Panc1 (cell line): ENCODE measurements at regions of chr5 and their contacts with region 1.

Region 1: DNA sequence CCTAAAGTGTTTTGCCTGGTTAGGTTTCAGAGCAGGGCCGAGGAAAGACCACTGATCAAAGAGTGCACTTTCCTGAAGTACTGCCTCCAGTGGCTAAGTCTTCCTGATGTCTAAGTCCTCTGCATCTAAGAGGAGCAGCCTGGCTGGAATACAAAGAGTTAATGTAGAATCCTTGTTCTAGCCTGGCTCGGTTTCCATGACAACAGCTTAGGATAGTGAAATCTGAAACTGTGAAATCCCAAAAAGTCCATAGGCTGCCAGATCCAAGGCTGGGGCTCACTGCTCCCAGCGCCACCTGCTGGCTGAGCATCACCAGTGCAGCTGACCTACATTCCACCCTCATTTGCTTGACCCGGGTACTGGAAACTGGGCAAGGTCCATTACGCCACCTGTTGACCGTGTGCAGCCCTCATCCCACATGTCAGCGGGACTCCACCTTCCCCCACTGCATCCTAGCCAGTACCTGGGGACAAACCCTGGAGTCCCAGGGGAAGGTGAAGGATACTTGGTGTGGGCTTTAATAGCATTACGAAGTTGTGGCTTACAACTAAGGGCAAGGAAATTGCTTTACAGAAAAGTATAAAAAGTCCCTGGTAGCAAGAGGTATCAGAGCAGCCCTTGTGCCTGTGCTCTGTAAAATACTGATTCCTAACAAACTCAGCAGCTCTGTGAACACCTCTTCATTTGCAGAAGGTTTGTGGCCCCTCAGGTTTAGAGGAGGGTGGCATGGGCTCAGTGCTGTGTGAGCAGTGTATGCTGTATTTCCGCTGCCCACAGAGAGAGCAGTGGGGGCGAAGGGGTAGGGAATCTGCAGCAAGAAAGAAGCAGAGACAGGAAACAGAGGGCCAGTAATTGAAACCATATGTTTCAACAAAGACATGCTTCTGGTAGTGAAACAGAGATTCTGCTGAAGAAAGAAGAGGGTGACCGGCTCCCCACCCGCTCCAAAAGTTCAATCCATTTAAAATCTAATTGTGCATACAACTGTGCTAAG is 36.0 kb downstream of the PCDHGC5 start:
- DNase-seq: peak; percentile 84
- ATAC-seq: peak; percentile 90
- H3K4me3 ChIP-seq: no peak overlapping the region
- H3K27ac ChIP-seq: peak overlapping the region; percentile 51
- H3K4me1 ChIP-seq: peaks cover 35% of the 10 kb centered on the region
- H3K27me3 ChIP-seq: no peaks in the 10 kb centered on the region
- CTCF ChIP-seq: peak; percentile 100

Region 2: GRCh38 chr5:141349917-141350619 is 174.8 kb before region 1 on chr5 and contains the start of gene PCDHGB1:
- CTCF ChIA-PET with region 1: no interaction called
- POLR2A ChIA-PET with region 1: no interaction called
- in situ Hi-C with region 1: no loop called
- intact Hi-C with region 1: loop called (anchors 10 kb)
- DNase-seq: no peak
- ATAC-seq: peak; percentile 97
- H3K4me3 ChIP-seq: peak within 1 kb of the TSS; percentile 51 to 68
- H3K27ac ChIP-seq: peak within 1 kb of the TSS; percentile 5; the same call in 1 of the 2 replicates
- H3K4me1 ChIP-seq: no peaks in the 10 kb centered on the region
- H3K27me3 ChIP-seq: no peaks in the 10 kb centered on the region; the same call in 1 of the 2 replicates
- CTCF ChIP-seq: peak; percentile 81
- total RNA-seq, gene PCDHGB1: 2.0 TPM

Region 3: DNA sequence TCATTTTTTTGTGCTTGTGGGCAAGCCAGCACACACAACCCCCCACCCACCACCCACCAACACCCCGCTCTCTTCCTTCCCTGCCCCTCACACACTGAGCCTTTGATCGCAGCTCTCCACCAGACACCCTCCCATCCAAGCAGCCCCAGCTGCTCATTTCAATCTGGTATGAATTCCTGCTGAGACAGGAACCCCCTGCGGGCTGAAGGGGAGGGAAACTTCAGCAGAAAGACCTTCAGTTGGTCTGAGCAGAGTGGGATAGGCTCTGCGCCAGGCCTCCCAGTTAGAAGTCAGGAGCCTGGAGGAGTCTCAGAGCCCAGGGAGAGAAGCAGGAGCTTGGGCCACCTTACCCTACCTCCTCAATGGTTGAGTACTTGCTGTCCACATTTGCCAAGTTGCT is 28.9 kb before region 1 on chr5:
- CTCF ChIA-PET with region 1: no interaction called
- POLR2A ChIA-PET with region 1: no interaction called
- in situ Hi-C with region 1: no loop called
- intact Hi-C with region 1: no loop called
- DNase-seq: no peak
- ATAC-seq: no peak
- H3K4me3 ChIP-seq: no peak overlapping the region
- H3K27ac ChIP-seq: no peak overlapping the region
- H3K4me1 ChIP-seq: no peaks in the 10 kb centered on the region
- H3K27me3 ChIP-seq: no peaks in the 10 kb centered on the region
- CTCF ChIP-seq: no peak

Region 4: GRCh38 chr5:141564216-141564692 is 39.4 kb after region 1 on chr5:
- CTCF ChIA-PET with region 1: no interaction called
- POLR2A ChIA-PET with region 1: no interaction called
- in situ Hi-C with region 1: no loop called
- intact Hi-C with region 1: no loop called
- DNase-seq: peak; percentile 87
- ATAC-seq: peak; percentile 90
- H3K4me3 ChIP-seq: no peak overlapping the region
- H3K27ac ChIP-seq: peak overlapping the region; percentile 83
- H3K4me1 ChIP-seq: peaks cover 12% of the 10 kb centered on the region
- H3K27me3 ChIP-seq: no peaks in the 10 kb centered on the region
- CTCF ChIP-seq: peak; percentile 91